ENCODE measurements at regions of chr1 and their contacts with region 1.

Region 1: GRCh38 chr1:205591522-205592351 is 40.1 kb downstream of the ELK4 start:
- DNase-seq: peak; percentile 87 to 96
- ATAC-seq: peak; percentile 95
- H3K4me3 ChIP-seq: no peak overlapping the region
- H3K27ac ChIP-seq: no peak overlapping the region
- H3K4me1 ChIP-seq: no peaks in the 10 kb centered on the region
- H3K27me3 ChIP-seq: no peaks in the 10 kb centered on the region

Region 2: GRCh38 chr1:205528887-205529825 is 62.6 kb before region 1 on chr1:
- intact Hi-C with region 1: loop called in 1 of 2 experiments (anchors 5 kb)
- DNase-seq: peak; percentile 85 to 96
- ATAC-seq: peak; percentile 88
- H3K4me3 ChIP-seq: no peak overlapping the region
- H3K27ac ChIP-seq: no peak overlapping the region
- H3K4me1 ChIP-seq: no peaks in the 10 kb centered on the region
- H3K27me3 ChIP-seq: no peaks in the 10 kb centered on the region

Region 3: DNA sequence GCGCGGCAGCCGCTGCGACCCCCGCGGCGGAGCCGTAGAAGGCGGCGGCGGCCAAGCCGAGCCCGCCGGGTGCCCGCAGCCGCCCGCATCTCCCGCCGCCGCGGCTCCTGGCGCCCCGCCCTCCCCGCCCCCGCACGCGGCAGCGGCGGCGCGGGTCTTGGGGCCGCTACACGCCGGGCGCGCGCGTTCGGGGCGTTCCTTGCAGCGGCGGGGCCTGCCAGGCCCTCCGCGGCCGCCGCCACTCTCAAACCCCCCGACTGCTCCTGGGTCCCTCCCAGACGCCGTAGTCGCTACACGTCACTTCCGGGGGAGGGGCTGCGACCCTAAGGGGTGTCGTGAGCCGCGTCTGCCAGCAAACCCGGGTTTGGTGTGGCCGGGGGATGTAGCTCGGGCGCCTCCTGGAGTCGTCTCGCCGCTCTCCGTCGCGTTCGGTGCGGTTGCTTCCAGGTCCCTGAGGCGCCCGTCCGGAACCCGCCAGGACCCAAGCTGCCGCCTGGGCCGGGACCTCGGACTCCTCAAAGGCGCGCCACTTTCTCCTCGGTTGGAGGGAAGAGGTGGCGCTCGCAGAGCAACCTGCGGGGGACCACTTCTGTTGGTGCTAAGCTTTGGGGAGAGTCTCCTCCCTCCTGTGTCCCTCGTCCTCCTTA is 40.1 kb after region 1 on chr1 and contains the start of gene ELK4:
- intact Hi-C with region 1: loop called (anchors 2 to 5 kb)
- DNase-seq: peak; percentile 99 to 100
- ATAC-seq: peak; percentile 99
- H3K4me3 ChIP-seq: peak within 1 kb of the TSS; percentile 95 to 100
- H3K27ac ChIP-seq: peak within 1 kb of the TSS; percentile 91 to 100
- H3K4me1 ChIP-seq: peaks cover 3 to 4% of the 10 kb centered on the region in 2 donors
- H3K27me3 ChIP-seq: no peaks in the 10 kb centered on the region
- total RNA-seq, gene ELK4: 66.1 to 90.4 TPM

Region 4: GRCh38 chr1:205658943-205659581 is 67.3 kb after region 1 on chr1:
- intact Hi-C with region 1: loop called (anchors 1 to 2 kb)
- DNase-seq: peak; percentile 85 to 95
- ATAC-seq: peak; percentile 83
- H3K4me3 ChIP-seq: no peak overlapping the region
- H3K27ac ChIP-seq: no peak overlapping the region
- H3K4me1 ChIP-seq: no peaks in the 10 kb centered on the region
- H3K27me3 ChIP-seq: no peaks in the 10 kb centered on the region

Region 5: DNA sequence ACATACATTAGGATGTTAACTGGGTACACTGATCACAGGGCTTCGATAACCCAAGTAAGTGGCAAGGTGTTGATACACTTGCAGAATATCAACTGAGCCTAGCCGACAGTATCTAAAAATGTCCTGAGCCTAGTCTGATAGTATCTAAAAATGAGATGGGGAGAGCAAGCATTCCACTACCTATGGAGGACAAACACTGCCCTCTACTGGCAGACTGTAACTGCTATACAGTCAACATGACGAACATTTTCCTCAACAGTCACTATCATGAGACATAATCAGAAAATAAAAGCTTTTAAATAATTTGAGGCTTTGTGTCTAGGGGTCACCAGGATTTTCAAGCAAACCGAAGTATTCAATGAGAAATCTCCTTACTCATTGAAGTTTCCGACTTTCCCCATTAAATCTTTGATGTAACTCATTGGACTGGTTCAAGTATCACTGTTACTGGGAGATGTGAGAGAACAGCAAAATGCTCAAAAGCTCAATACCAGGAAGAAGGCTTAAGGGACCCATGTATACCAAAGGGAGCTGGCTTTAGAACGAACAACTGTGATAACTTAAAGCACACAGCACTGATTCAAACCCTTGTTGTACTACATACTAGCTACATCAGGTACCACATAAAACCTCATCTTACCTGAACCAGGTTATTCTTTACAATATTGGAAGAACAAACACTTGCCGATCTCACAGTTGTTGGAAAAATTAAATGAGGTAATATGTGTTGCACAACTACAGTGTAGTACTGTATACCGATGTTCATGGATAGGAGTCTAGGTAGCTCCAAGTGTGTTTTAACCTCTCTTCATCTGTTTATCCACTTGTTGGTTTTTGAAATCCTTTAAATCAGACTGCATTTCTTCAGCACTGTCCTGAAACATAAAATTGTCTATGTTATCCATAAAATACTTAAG is 119.6 kb after region 1 on chr1:
- intact Hi-C with region 1: loop called (anchors 5 kb)
- DNase-seq: no peak
- ATAC-seq: peak; percentile 90
- H3K4me3 ChIP-seq: no peak overlapping the region
- H3K27ac ChIP-seq: no peak overlapping the region
- H3K4me1 ChIP-seq: no peaks in the 10 kb centered on the region
- H3K27me3 ChIP-seq: no peaks in the 10 kb centered on the region

Measured in aorta (tissue), 5 donors.